AG04450 (cell line): ENCODE measurements at regions of chr6 and their contacts with region 1.

Region 1: GRCh38 chr6:144582939-144583613 is 297.9 kb downstream of the UTRN start:
- DNase-seq: no peak
- H3K4me3 ChIP-seq: peak overlapping the region; percentile 48
- H3K27ac ChIP-seq: no peak overlapping the region
- H3K27me3 ChIP-seq: no peaks in the 10 kb centered on the region
- CTCF ChIP-seq: no peak

Region 2: DNA sequence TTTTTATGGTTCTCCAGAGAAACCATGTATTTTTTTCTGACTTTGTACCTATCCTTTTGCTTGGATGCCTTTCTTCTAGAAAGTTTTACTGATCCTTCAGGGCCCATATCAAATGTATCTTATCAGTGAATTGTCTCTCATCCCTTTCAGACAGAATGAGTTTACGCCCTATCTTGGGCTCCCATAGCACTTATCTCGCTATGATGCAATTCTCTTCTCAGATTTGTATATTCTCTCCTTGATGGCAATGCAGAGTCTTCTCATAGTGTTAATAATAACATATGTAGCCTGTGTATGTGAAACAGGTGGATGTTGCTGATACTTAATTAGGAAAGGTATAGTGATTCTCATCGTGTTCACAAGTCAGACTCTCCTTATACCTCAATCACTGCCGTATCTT is 38.3 kb after region 1 on chr6:
- CTCF ChIA-PET with region 1: interaction called, 13 read pairs
- POLR2A ChIA-PET with region 1: no interaction called
- DNase-seq: no peak
- H3K4me3 ChIP-seq: no peak overlapping the region
- H3K27ac ChIP-seq: no peak overlapping the region
- H3K27me3 ChIP-seq: no peaks in the 10 kb centered on the region
- CTCF ChIP-seq: no peak

Region 3: GRCh38 chr6:144912474-144912873 is 329.4 kb after region 1 on chr6:
- CTCF ChIA-PET with region 1: interaction called, 10 read pairs
- POLR2A ChIA-PET with region 1: no interaction called
- DNase-seq: peak; percentile 57
- H3K4me3 ChIP-seq: no peak overlapping the region
- H3K27ac ChIP-seq: no peak overlapping the region
- H3K27me3 ChIP-seq: no peaks in the 10 kb centered on the region
- CTCF ChIP-seq: peak; percentile 35

Region 4: DNA sequence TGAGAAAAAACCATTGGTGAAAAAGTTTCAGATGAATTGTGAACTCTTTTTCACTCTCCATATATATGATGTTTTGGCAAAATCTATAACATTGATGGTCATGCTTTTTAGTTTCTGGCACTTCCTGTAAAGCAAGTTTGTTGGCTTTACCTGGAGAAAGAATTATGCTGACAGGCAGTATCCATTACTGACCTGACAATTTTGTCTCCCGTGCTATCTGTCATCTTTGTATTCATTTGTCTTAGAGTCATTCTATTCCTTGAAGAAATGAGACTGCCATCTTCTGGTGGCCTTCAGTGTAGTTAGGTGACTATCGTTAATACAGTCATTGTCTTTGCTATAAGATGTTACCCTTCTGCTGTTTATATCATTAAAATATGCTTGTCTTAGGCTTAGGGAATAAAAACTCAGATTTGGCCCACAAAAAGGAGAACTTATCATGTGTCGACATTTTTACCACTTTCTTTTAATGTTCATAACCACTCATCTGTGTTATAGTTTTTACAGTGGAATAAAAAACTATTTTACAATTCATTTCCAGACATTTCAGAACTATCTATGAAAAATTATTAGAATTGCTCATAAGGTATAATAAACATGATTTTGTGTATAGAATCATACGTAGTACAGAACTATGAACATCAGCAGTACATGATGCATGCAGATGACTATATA is 445.2 kb after region 1 on chr6:
- CTCF ChIA-PET with region 1: interaction called, 31 read pairs
- POLR2A ChIA-PET with region 1: no interaction called
- DNase-seq: no peak
- H3K4me3 ChIP-seq: no peak overlapping the region
- H3K27ac ChIP-seq: no peak overlapping the region
- H3K27me3 ChIP-seq: no peaks in the 10 kb centered on the region
- CTCF ChIP-seq: peak; percentile 58

Region 5: DNA sequence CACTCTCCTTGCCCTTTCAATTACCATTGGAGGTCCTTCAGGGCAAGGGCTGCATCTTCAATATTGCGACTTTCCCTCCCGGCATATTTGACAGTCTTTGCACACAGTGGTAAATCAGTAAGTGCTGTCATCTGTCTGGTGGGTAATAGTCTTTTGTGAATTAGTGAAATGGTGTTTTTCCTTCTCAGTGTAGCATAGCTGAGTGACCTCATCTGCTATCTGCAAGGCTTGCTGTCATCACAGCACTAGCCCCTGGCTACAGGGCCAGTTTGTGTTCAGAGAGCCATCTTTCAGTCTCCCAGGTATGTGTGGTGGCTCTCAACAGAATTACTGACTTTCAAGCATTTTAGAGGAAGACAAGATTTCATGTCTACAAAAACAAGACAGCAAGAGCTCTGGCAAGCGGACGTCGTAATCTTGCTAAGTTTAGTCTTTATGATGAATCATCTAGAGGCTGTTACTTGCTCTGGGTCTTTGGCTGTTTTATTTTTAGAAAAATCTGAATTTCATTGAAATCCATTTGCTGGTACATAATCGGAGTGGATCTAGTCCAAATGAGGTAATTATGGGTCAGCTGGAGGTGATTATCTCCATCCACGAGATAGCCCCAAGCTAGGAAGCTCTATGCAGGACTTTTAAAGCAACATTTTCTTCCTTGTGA is 623.3 kb after region 1 on chr6:
- CTCF ChIA-PET with region 1: interaction called, 43 read pairs
- POLR2A ChIA-PET with region 1: no interaction called
- DNase-seq: no peak
- H3K4me3 ChIP-seq: no peak overlapping the region
- H3K27ac ChIP-seq: peak overlapping the region; percentile 12
- H3K27me3 ChIP-seq: no peaks in the 10 kb centered on the region
- CTCF ChIP-seq: no peak

Region 6: GRCh38 chr6:145633981-145634627 is 1051.0 kb after region 1 on chr6:
- CTCF ChIA-PET with region 1: interaction called, 48 read pairs
- POLR2A ChIA-PET with region 1: no interaction called
- DNase-seq: peak; percentile 59
- H3K4me3 ChIP-seq: no peak overlapping the region
- H3K27ac ChIP-seq: no peak overlapping the region
- H3K27me3 ChIP-seq: no peaks in the 10 kb centered on the region
- CTCF ChIP-seq: peak; percentile 90